ENCODE measurements at regions of chr5 and their contacts with region 1.

Region 1: DNA sequence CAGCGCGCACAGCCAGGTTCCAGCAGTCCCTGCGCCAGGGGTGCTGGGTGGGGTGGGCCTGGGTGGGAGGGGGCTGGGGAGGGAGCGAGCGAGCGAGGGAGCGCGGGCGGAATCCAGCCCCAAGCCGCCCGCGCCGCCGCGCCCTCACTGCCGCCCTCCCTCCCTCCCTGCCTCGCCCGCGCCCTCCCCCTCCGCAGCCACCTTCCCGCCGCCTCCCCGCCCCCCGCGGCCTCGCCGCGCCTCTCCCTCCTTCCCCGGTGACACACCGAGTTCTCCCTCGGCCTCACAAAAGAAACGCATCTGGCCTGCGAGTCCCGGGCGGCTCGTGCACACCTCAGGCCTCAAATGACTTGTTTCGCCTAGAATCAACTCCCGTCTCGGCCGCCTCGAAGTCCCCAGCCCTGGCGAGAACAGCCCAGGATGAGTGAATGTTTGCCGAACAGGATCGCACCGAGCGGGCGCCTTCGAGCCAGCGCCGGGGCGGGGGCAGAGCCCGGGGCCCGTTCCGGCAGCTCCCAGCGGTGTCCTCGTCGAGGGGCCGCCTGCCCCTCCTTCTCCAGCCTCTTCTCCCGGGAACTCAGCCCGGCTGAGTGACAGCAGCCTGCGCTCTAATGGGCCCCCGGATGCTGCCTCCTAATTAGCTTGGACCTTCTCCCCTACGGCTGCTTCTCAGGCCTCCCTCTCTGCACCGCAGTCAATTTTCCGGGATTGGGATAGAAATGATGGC is 371 bp upstream of the PITX1 start:
- H3K4me3 Mint-ChIP-seq: peak overlapping the region; percentile 74
- H3K27ac Mint-ChIP-seq: no peak overlapping the region
- H3K4me1 Mint-ChIP-seq: peaks cover 49% of the 10 kb centered on the region
- H3K27me3 Mint-ChIP-seq: peaks cover 89% of the 10 kb centered on the region

Region 2: GRCh38 chr5:133483406-133484090 is 1550.9 kb before region 1 on chr5:
- intact Hi-C with region 1: no loop called
- H3K4me3 Mint-ChIP-seq: no peak overlapping the region
- H3K27ac Mint-ChIP-seq: no peak overlapping the region
- H3K4me1 Mint-ChIP-seq: peaks cover 6% of the 10 kb centered on the region
- H3K27me3 Mint-ChIP-seq: peaks cover 15% of the 10 kb centered on the region

Region 3: GRCh38 chr5:135116160-135116561 is 81.8 kb after region 1 on chr5:
- intact Hi-C with region 1: loop called (anchors 5 kb)
- H3K4me3 Mint-ChIP-seq: peak overlapping the region; percentile 48
- H3K27ac Mint-ChIP-seq: peak overlapping the region; percentile 99
- H3K4me1 Mint-ChIP-seq: peaks cover 97% of the 10 kb centered on the region
- H3K27me3 Mint-ChIP-seq: peaks cover 2% of the 10 kb centered on the region

Region 4: DNA sequence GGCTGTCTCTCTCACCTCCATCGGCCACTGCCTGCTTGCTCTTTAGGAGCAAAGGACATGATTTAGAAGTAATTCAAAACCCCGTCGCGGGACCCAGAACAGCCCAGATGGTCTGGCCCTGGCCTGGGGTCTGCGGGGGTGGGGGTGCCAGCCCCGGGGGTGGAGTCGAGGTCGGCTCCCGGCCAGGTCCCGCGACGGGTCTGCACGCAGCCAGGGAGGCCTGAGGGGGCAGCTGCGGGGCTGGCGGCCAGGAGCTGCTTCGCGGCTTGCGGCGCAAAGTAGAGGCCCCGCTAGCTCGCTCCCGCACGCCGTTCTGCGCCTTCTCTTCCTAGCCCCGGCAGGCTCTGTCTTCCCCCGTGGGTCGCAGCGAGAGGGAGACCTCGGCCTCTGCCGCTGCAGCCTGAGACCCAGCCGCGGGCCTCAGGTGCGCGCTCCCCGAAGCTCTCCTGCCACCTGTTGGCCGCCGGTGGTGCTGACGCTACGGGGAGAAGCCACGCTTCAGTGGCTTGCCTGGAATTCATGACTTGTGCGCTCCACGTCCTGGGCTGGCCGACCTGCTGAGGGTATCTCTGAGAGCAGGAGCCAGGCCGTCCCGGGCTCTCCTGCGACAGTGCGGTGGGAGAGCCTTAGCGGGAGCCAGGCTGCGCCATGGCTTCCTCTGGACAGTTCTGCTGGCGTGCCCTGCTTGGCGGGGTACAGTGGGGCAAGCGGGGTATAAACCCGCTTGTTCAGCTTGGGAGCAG is 156.9 kb after region 1 on chr5:
- intact Hi-C with region 1: loop called (anchors 2 kb)
- H3K4me3 Mint-ChIP-seq: peak overlapping the region; percentile 88
- H3K27ac Mint-ChIP-seq: peak overlapping the region; percentile 73
- H3K4me1 Mint-ChIP-seq: peaks cover 13% of the 10 kb centered on the region
- H3K27me3 Mint-ChIP-seq: peaks cover 74% of the 10 kb centered on the region

Measured in dendritic cell treated with granulocyte-macrophage colony-stimulating factor and Interleukin-4, amounts not matched to agents 40 ng/mL and 50 ng/mL, for 4 days (primary cell).